K562 (cell line): ENCODE measurements at regions of chr1 and their contacts with region 1.

Region 1: DNA sequence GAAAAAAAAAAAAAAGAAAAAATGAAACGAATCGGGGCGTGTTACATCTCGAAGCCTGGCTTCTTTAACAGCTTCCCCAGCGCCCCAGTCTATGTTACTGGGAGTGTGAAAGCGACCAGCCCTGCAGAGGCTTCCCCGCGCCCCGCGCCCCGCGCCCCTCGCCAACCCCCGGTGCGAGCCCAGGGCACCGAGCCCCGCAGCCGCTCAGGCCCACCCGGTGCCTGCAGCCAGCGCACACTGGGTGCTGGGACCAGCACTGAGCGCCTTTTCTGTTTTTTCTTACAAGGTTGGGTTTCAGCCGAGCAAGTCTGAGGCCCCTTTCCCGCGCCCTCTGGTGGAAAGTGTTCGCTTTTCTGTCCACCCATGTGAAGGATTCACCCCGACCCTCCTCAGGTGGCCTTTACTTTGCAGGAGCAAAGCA is 42.1 kb upstream of the ZNF496 start:
- DNase-seq: peak; percentile 32 to 79 (median 56)
- ATAC-seq: peak; percentile 86
- H3K4me3 ChIP-seq: peak overlapping the region; percentile 32
- H3K27ac ChIP-seq: no peak overlapping the region
- H3K4me1 ChIP-seq: peaks cover 10 to 17% of the 10 kb centered on the region in 2 experiments
- H3K27me3 ChIP-seq: no peaks in the 10 kb centered on the region; a peak in 1 of 5 replicates
- CTCF ChIP-seq: peak; percentile 64 to 75 (median 71)
- EP300 ChIP-seq: no peak
- POLR2A ChIP-seq: no peak
- RAD21 ChIP-seq: peak in 1 of 2 experiments; percentile 44; a peak in 2 of 4 replicates

Region 2: GRCh38 chr1:247228133-247228532 is 145.6 kb before region 1 on chr1:
- CTCF ChIA-PET with region 1: no interaction called
- POLR2A ChIA-PET with region 1: no interaction called
- in situ Hi-C with region 1: no loop called
- intact Hi-C with region 1: loop called (anchors 10 kb)
- DNase-seq: peak in 2 of 4 experiments; percentile 29 to 59
- ATAC-seq: peak; percentile 99
- H3K4me3 ChIP-seq: no peak overlapping the region
- H3K27ac ChIP-seq: no peak overlapping the region
- H3K4me1 ChIP-seq: no peaks in the 10 kb centered on the region
- H3K27me3 ChIP-seq: no peaks in the 10 kb centered on the region
- CTCF ChIP-seq: peak in 2 of 3 experiments; percentile 35 to 41; a peak in 3 of 6 replicates
- EP300 ChIP-seq: no peak
- POLR2A ChIP-seq: no peak
- RAD21 ChIP-seq: peak in 1 of 2 experiments; percentile 20; a peak in 1 of 4 replicates

Region 3: DNA sequence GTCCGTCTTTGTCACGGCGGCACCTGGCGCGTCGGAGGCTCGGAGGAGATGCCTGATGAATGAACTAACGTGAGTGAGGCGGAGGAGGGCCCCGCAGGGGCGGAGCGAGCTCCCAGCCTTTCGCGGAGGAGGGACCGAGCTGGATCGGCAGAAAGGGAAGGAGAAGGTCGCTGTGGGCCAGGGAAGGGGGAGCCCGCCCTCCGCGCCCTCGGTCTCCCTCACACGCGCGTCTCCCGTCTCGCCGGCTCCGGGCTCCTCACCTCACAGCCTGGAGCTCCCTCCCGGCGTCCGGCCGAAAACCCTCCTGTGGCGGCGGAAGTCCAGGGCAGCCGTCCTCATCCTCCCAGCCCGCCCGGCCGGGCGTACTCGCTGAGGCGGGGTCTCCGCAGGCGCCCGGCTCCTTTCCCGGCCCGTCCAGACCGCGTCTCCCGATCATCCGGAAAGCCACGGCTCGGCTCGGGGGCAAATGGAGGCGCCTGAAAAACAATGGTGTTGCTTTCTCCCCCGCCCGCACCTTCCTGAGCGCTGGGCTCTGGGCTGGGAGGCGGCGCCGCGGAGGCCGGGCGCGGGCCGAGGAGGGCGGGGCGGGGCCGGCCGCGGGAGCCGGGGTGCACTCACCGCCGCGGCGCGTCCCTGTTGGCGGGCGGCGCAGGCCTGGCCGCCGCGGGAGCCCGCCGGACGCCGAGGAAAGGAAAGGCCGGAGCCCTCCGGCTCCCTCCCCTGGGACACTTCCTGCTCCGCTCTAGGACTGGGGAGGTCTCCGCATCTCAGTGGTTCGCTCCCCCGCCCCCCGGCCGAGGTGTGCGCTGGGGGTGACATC is 42.3 kb before region 1 on chr1 and contains the start of gene ZNF496:
- CTCF ChIA-PET with region 1: no interaction called
- POLR2A ChIA-PET with region 1: no interaction called
- in situ Hi-C with region 1: no loop called
- intact Hi-C with region 1: loop called (anchors 2 kb)
- DNase-seq: peak; percentile 93 to 97 (median 94)
- ATAC-seq: peak; percentile 82
- H3K4me3 ChIP-seq: peak within 1 kb of the TSS; percentile 92
- H3K27ac ChIP-seq: peak within 1 kb of the TSS; percentile 91
- H3K4me1 ChIP-seq: peaks cover 36 to 67% of the 10 kb centered on the region in 2 experiments
- H3K27me3 ChIP-seq: no peaks in the 10 kb centered on the region
- CTCF ChIP-seq: no peak
- EP300 ChIP-seq: peak; percentile 23; the same call in 1 of the 2 replicates
- POLR2A ChIP-seq: peak; percentile 83
- RAD21 ChIP-seq: 0 out of 4 replicates have a peak, but pooled peaks of 1 of the 2 experiments have one; percentile 24
- polyA plus RNA-seq, gene ZNF496: 4.3 to 5.9 TPM

Region 4: DNA sequence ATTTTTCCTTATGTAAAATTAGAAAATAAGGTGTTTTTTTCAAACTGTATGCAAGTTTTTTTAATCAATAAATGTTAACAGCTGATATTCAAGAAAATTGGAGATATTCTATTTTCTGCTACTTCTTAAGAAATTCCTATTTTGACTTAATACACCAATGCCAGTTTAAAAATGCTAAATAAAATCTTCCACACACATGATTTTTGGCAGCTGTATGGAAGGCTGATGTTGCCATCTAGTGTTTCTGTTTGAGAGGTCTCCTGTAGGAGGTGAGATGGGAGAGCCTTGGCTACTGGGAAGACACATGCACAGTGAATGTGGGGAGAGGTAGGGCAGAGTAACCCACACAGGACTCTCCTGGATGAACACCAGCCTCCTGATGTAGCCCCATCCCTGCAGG is 113.3 kb after region 1 on chr1:
- CTCF ChIA-PET with region 1: interaction called, 4 read pairs
- POLR2A ChIA-PET with region 1: no interaction called
- in situ Hi-C with region 1: no loop called
- intact Hi-C with region 1: loop called (anchors 5 kb)
- DNase-seq: peak; percentile 28 to 61 (median 43)
- ATAC-seq: peak; percentile 95
- H3K4me3 ChIP-seq: no peak overlapping the region
- H3K27ac ChIP-seq: no peak overlapping the region
- H3K4me1 ChIP-seq: no peaks in the 10 kb centered on the region
- H3K27me3 ChIP-seq: peaks cover 0 to 8% of the 10 kb centered on the region in 2 experiments; a peak in 4 of 5 replicates
- CTCF ChIP-seq: peak; percentile 57 to 82 (median 63)
- EP300 ChIP-seq: no peak
- POLR2A ChIP-seq: no peak
- RAD21 ChIP-seq: peak; percentile 88 to 89

Region 5: GRCh38 chr1:247576495-247576894 is 202.8 kb after region 1 on chr1:
- CTCF ChIA-PET with region 1: no interaction called
- POLR2A ChIA-PET with region 1: no interaction called
- in situ Hi-C with region 1: no loop called
- intact Hi-C with region 1: loop called (anchors 5 kb)
- DNase-seq: peak in 1 of 4 experiments; percentile 18
- ATAC-seq: 0 out of 3 replicates have a peak, but pooled peaks have one; percentile 34
- H3K4me3 ChIP-seq: no peak overlapping the region
- H3K27ac ChIP-seq: no peak overlapping the region
- H3K4me1 ChIP-seq: no peaks in the 10 kb centered on the region
- H3K27me3 ChIP-seq: no peaks in the 10 kb centered on the region
- CTCF ChIP-seq: peak; percentile 33 to 60 (median 34); a peak in 4 of 6 replicates
- EP300 ChIP-seq: no peak
- POLR2A ChIP-seq: no peak
- RAD21 ChIP-seq: peak; percentile 71 to 79

Region 6: DNA sequence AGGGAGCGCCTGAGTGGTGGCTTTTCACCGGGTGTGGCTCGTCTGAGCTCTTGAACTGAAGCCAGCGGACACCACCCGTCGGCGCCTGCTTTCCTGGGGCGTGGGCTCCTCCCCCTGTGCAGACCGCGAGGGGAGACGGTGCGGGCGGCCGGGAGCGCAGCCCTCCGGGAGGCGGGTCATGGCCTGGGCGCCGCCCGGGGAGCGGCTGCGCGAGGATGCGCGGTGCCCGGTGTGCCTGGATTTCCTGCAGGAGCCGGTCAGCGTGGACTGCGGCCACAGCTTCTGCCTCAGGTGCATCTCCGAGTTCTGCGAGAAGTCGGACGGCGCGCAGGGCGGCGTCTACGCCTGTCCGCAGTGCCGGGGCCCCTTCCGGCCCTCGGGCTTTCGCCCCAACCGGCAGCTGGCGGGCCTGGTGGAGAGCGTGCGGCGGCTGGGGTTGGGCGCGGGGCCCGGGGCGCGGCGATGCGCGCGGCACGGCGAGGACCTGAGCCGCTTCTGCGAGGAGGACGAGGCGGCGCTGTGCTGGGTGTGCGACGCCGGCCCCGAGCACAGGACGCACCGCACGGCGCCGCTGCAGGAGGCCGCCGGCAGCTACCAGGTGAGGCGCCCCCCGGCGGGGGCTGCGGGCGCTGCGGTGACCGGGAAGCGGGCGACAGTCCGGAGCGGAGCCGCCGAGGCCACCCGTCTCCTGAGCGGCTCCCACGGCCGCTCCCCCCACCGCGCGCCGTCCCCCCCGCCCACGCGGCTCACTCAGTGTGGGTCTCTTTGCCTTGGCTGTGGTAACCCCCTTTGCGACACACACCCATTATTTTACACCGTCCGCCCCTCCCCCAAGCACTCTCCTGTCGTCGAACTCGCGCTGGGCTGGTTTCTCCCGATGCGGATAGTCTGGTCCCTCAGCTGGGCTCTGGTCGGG is 483.6 kb after region 1 on chr1 and contains the start of gene TRIM58:
- CTCF ChIA-PET with region 1: no interaction called
- POLR2A ChIA-PET with region 1: interaction called, 3 read pairs
- in situ Hi-C with region 1: no loop called
- intact Hi-C with region 1: loop called (anchors 10 kb)
- DNase-seq: peak; percentile 92 to 96 (median 94)
- ATAC-seq: peak; percentile 88
- H3K4me3 ChIP-seq: peak within 1 kb of the TSS; percentile 84
- H3K27ac ChIP-seq: peak within 1 kb of the TSS; percentile 88
- H3K4me1 ChIP-seq: peaks cover 34 to 37% of the 10 kb centered on the region in 2 experiments
- H3K27me3 ChIP-seq: no peaks in the 10 kb centered on the region
- CTCF ChIP-seq: peak; percentile 56 to 98 (median 83)
- EP300 ChIP-seq: peak; percentile 57
- POLR2A ChIP-seq: peak; percentile 86
- RAD21 ChIP-seq: peak; percentile 54 to 55
- polyA plus RNA-seq, gene TRIM58: 3.8 to 5.8 TPM